Endothelial cell of umbilical vein (primary cell): ENCODE measurements at regions of chrX and their contacts with region 1.

Region 1: GRCh38 chrX:116232804-116233203 is 62.3 kb downstream of the AGTR2 start:
- DNase-seq: peak; percentile 17
- H3K4me3 ChIP-seq: no peak overlapping the region
- H3K27ac ChIP-seq: no peak overlapping the region
- H3K4me1 ChIP-seq: no peaks in the 10 kb centered on the region
- H3K27me3 ChIP-seq: no peaks in the 10 kb centered on the region
- CTCF ChIP-seq: no peak
- POLR2A ChIP-seq: no peak

Region 2: GRCh38 chrX:116272328-116272727 is 39.5 kb after region 1 on chrX:
- CTCF ChIA-PET with region 1: no interaction called
- POLR2A ChIA-PET with region 1: no interaction called
- dilution Hi-C with region 1: no loop called
- intact Hi-C with region 1: loop called (anchors 1 kb)
- DNase-seq: peak; percentile 31
- H3K4me3 ChIP-seq: no peak overlapping the region
- H3K27ac ChIP-seq: peak overlapping the region; percentile 41
- H3K4me1 ChIP-seq: no peaks in the 10 kb centered on the region
- H3K27me3 ChIP-seq: no peaks in the 10 kb centered on the region
- CTCF ChIP-seq: no peak
- POLR2A ChIP-seq: no peak

Region 3: DNA sequence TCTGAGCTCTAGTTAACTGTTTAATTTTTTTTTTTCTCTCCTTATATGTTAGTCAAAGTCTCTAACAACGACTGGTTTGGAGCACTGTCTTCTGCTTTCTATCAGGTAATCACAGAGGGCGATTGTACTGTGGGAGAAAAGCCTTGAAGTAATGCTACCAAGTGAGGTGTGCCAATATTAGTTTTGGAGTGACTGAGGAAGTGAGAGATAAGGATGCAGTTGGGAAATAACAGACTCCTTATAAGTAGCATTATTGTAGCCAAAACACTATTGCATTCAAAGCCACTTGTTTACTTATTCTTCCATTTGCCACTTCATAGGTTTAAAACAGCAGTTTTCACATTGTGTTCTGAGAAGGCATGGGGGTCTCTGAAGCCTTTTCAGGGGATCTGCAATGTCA is 124.5 kb after region 1 on chrX:
- CTCF ChIA-PET with region 1: no interaction called
- POLR2A ChIA-PET with region 1: no interaction called
- dilution Hi-C with region 1: no loop called
- intact Hi-C with region 1: no loop called
- DNase-seq: no peak
- H3K4me3 ChIP-seq: no peak overlapping the region
- H3K27ac ChIP-seq: no peak overlapping the region
- H3K4me1 ChIP-seq: no peaks in the 10 kb centered on the region
- H3K27me3 ChIP-seq: no peaks in the 10 kb centered on the region
- CTCF ChIP-seq: no peak
- POLR2A ChIP-seq: no peak